Activated CD4-positive, alpha-beta T cell treated with anti-CD3 and anti-CD28 coated beads, Interleukin-2, amount 10 ng/mL, durations not matched to agents 7 days and 5 days (primary cell): ENCODE measurements at regions of chr18 and their contacts with region 1.

Region 1: DNA sequence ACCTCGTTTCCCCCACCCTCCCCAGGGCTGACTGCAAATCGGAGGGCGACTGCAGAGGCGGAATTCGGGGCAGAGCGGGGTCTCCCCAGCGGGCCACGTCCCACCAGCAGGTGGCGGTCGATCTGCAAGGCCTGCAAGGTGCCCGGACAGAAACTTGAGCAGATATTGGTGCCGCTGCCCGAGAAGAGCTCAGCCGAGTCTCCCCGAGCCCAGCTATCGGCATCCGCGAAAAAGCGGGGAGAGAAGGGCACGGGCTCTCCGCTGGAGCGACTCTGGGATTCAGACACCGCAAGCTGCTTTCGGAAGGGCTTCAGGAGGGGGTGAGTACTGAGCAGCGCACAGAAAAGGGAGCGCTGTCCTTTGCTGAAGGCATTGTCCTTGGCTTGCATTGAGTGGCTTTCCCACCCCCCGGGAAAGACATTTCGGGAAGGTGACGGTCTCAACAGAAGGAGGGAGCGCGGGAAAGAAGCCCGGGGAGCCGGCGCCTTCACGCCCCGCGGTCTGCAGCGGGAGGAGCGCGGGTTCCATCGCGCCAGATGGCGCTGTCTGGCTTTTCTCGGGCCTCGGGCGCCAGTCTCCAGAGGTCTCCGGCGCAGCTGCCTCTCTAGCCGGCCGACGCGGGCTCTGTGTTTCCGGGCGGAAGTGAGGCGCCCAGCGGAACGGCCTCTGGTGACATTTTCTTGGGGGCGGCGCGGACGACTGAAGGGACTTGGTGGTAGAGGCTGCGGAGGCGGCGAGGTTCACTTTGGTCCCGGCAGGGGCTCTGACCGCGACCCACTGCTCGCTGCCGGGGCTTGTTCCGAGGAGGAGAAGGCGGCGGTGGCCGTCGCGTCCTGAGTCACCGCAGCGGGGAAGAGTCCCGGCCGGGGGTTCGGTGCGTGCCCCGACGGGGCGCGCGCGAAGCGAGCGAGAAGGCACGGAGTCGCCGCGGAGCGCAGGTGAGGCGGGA is 69.5 kb downstream of the HAUS1 start:
- DNase-seq: peak; percentile 95
- H3K4me3 Mint-ChIP-seq: peak overlapping the region; percentile 99
- H3K27ac Mint-ChIP-seq: peak overlapping the region; percentile 100
- H3K4me1 Mint-ChIP-seq: peaks cover 59% of the 10 kb centered on the region
- H3K27me3 Mint-ChIP-seq: no peaks in the 10 kb centered on the region

Region 2: DNA sequence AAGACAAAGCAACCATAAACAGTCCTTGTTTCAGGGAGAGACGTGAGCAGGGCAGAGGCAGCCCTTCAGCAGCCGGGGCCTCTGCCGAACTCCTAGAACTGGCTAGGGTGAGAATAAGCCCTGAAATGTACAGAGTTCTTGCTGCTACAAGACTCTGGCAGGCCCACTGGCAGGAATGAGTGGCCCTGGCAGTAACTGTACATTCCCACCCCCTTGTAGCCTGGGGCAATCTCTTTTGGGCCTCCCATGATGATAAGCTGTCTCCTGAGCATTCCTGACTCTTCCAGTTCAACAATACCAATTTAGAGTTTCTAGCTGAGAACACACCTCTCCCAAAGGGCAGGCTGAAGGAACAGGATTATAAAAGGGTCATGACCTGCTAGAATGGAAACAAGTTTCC is 15.2 kb before region 1 on chr18:
- CTCF ChIA-PET with region 1: interaction called, 63 read pairs
- POLR2A ChIA-PET with region 1: interaction called, 4 read pairs
- DNase-seq: no peak
- H3K4me3 Mint-ChIP-seq: no peak overlapping the region
- H3K27ac Mint-ChIP-seq: peak overlapping the region; percentile 71
- H3K4me1 Mint-ChIP-seq: peaks cover 82% of the 10 kb centered on the region
- H3K27me3 Mint-ChIP-seq: no peaks in the 10 kb centered on the region

Region 3: DNA sequence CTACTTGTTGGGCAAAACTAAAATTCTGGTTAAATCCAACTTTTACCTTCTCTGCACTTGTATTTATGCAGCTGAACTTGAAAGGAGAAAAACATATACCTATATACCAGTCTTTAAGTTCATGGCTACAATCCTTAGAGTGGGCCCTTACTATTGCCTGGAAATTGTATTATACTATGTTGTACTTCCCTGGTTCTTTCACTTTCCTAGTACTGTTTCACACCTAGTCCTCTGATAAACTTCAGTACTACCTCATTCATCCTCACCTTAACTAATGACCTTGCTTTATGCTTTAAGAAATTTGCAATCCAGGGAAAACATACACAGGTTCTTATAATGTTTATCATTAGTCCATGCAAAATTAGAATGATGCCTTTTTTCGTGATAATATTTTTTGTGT is 34.3 kb after region 1 on chr18:
- CTCF ChIA-PET with region 1: interaction called, 14 read pairs
- POLR2A ChIA-PET with region 1: no interaction called
- DNase-seq: no peak
- H3K4me3 Mint-ChIP-seq: no peak overlapping the region
- H3K27ac Mint-ChIP-seq: peak overlapping the region; percentile 1
- H3K4me1 Mint-ChIP-seq: peaks cover 81% of the 10 kb centered on the region
- H3K27me3 Mint-ChIP-seq: no peaks in the 10 kb centered on the region

Region 4: DNA sequence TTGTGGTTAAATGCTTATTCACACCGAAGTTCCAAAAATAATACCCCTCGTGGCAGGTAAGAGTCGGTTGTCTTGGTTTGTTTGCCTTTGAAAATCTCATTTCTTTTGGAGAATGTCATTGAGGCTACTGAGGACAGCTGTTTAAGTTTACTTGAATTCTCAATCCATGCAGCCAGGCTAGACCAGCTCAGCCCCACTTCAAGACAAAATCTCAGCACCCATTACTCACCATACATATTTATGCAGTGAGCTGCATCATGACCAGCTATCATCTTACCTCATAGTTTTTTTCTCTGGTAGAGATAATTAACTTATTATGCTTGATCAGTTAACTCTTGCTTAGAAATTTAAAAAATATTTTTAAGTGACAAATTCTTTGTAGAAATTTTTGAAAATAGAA is 46.4 kb after region 1 on chr18:
- CTCF ChIA-PET with region 1: interaction called, 13 read pairs
- POLR2A ChIA-PET with region 1: interaction called, 4 read pairs
- DNase-seq: no peak
- H3K4me3 Mint-ChIP-seq: no peak overlapping the region
- H3K27ac Mint-ChIP-seq: peak overlapping the region; percentile 27
- H3K4me1 Mint-ChIP-seq: peaks cover 69% of the 10 kb centered on the region
- H3K27me3 Mint-ChIP-seq: no peaks in the 10 kb centered on the region

Region 5: DNA sequence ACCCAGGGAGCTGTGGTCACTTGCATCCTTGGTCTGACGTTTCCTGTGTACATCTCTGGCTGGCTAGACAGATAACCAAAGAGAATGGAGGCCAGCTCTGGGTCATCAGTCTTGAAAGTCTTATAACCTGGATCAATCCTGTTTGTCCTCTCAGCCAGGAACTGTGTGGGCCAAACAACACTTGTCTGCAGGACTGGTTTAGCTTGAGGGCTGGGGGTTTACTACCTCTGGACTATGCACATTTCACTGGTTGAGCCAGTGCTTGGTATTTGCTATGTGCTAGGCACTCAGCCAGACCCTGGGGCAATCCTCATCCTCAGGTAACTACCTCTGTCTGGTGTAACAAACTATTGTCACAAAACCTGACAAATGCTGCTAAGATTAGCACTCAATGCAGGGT is 100.2 kb after region 1 on chr18:
- CTCF ChIA-PET with region 1: interaction called, 13 read pairs
- POLR2A ChIA-PET with region 1: no interaction called
- DNase-seq: no peak
- H3K4me3 Mint-ChIP-seq: no peak overlapping the region
- H3K27ac Mint-ChIP-seq: no peak overlapping the region
- H3K4me1 Mint-ChIP-seq: peaks cover 22% of the 10 kb centered on the region
- H3K27me3 Mint-ChIP-seq: no peaks in the 10 kb centered on the region

Region 6: GRCh38 chr18:46657115-46657955 is 483.7 kb after region 1 on chr18 and contains the start of gene LOXHD1:
- CTCF ChIA-PET with region 1: interaction called, 17 read pairs
- POLR2A ChIA-PET with region 1: no interaction called
- DNase-seq: no peak
- H3K4me3 Mint-ChIP-seq: no peak within 1 kb of the TSS
- H3K27ac Mint-ChIP-seq: peak within 1 kb of the TSS; percentile 73
- H3K4me1 Mint-ChIP-seq: no peaks in the 10 kb centered on the region
- H3K27me3 Mint-ChIP-seq: peaks cover 6% of the 10 kb centered on the region
- total RNA-seq, gene LOXHD1: 0.25 to 0.35 TPM